Activated CD4-positive, alpha-beta memory T cell treated with anti-CD3 and anti-CD28 coated beads for 36 hours (primary cell): ENCODE measurements at regions of chr12 and their contacts with region 1.

Region 1: GRCh38 chr12:53352331-53353256 is 16.4 kb upstream of the SP7 start:
- DNase-seq: peak; percentile 90
- H3K4me3 Mint-ChIP-seq: no peak overlapping the region
- H3K27ac Mint-ChIP-seq: peak overlapping the region; percentile 12
- H3K4me1 Mint-ChIP-seq: peaks cover 9% of the 10 kb centered on the region
- H3K27me3 Mint-ChIP-seq: no peaks in the 10 kb centered on the region

Region 2: DNA sequence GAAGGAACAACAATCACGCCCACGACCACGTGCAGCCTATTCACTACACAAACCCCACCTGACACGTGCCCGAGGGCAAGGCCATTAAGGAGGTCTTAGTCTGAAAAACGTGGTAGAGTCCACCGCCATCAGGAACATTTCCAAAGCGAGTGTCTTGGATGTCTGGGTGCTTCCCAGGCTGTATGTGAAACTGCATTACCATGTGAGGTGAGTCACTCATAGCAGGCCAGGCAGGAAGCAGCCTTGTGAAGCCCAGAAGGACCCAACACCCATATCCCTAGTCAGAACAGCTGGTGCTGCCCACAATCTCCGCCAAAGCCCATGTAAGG is 515.2 kb before region 1 on chr12:
- CTCF ChIA-PET with region 1: no interaction called
- POLR2A ChIA-PET with region 1: no interaction called
- intact Hi-C with region 1: no loop called
- DNase-seq: peak; percentile 12
- H3K4me3 Mint-ChIP-seq: no peak overlapping the region
- H3K27ac Mint-ChIP-seq: no peak overlapping the region
- H3K4me1 Mint-ChIP-seq: peaks cover 22% of the 10 kb centered on the region
- H3K27me3 Mint-ChIP-seq: peaks cover 15% of the 10 kb centered on the region

Region 3: GRCh38 chr12:53047221-53048042 is 305.2 kb before region 1 on chr12:
- CTCF ChIA-PET with region 1: no interaction called
- POLR2A ChIA-PET with region 1: no interaction called
- intact Hi-C with region 1: no loop called
- DNase-seq: peak; percentile 74
- H3K4me3 Mint-ChIP-seq: peak overlapping the region; percentile 32
- H3K27ac Mint-ChIP-seq: no peak overlapping the region
- H3K4me1 Mint-ChIP-seq: peaks cover 29% of the 10 kb centered on the region
- H3K27me3 Mint-ChIP-seq: no peaks in the 10 kb centered on the region

Region 4: DNA sequence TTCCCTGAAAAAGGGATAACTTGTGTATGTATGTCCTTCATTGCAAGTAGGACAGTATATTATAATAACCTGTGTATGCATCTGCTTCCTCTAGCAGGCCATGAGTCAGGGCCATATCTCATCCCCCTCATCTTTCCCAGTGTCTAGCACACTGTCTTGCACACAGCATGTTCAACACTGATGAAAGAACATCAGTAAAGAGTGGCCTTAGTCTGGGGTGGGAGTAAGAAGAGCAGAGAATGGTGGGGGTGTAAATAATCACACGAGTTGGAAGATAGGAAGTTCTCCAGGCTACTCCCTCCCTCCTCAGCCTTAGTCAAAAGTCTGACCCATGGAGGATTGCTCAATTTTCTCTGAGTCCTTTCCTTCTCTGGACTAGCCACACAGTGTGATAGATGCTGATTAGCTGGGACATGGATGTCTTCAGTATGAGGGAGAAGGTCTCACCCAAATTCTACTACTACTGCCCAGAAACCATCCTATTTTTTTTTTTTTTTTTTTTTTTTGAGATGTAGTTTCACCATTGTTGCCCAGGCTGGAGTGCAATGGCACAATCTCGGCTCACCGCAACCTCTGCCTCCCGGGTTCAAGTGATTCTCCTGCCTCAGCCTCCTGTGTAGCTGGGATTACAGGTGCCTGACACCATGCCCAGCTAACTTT is 12.8 kb after region 1 on chr12:
- CTCF ChIA-PET with region 1: interaction called, 20 read pairs
- POLR2A ChIA-PET with region 1: no interaction called
- intact Hi-C with region 1: no loop called
- DNase-seq: no peak
- H3K4me3 Mint-ChIP-seq: no peak overlapping the region
- H3K27ac Mint-ChIP-seq: peak overlapping the region; percentile 79
- H3K4me1 Mint-ChIP-seq: peaks cover 9% of the 10 kb centered on the region
- H3K27me3 Mint-ChIP-seq: no peaks in the 10 kb centered on the region

Region 5: DNA sequence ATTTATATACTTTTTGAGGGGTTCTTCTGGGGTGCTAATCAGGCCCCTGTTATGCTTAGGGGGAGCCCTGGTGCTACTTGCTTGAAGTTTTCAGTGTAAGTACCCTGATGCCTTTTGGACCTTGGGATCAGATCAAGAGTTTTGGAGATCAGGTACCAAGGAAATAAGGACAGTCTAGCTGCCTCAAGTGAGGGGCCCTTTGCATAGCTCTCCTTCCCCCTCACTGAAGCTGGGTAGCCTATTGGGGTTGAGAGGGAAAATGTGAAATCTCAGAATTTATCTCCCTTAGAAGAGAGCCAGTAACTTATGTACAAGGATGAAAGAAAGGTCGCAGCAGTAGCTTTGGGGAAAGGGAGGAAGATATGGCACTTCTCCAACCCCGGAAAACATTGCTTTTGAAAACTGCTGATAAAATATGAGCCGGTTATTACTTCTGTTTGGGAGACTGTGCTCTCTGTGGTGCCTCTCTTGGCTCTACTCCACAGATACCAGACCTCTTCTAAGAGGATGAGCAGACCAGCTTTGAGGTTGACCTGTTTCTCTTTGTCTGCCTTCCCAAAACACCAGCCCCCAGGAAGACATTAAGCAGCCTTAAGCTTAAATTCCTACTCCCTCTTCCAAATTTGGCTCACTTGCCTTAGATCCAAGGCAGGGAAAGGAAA is 62.3 kb after region 1 on chr12:
- CTCF ChIA-PET with region 1: interaction called, 207 read pairs
- POLR2A ChIA-PET with region 1: no interaction called
- intact Hi-C with region 1: no loop called
- DNase-seq: no peak
- H3K4me3 Mint-ChIP-seq: no peak overlapping the region
- H3K27ac Mint-ChIP-seq: no peak overlapping the region
- H3K4me1 Mint-ChIP-seq: peaks cover 54% of the 10 kb centered on the region
- H3K27me3 Mint-ChIP-seq: no peaks in the 10 kb centered on the region

Region 6: GRCh38 chr12:53427905-53428594 is 75.5 kb after region 1 on chr12:
- CTCF ChIA-PET with region 1: interaction called, 207 read pairs
- POLR2A ChIA-PET with region 1: no interaction called
- intact Hi-C with region 1: no loop called
- DNase-seq: peak; percentile 69
- H3K4me3 Mint-ChIP-seq: no peak overlapping the region
- H3K27ac Mint-ChIP-seq: no peak overlapping the region
- H3K4me1 Mint-ChIP-seq: peaks cover 14% of the 10 kb centered on the region
- H3K27me3 Mint-ChIP-seq: no peaks in the 10 kb centered on the region

Region 7: DNA sequence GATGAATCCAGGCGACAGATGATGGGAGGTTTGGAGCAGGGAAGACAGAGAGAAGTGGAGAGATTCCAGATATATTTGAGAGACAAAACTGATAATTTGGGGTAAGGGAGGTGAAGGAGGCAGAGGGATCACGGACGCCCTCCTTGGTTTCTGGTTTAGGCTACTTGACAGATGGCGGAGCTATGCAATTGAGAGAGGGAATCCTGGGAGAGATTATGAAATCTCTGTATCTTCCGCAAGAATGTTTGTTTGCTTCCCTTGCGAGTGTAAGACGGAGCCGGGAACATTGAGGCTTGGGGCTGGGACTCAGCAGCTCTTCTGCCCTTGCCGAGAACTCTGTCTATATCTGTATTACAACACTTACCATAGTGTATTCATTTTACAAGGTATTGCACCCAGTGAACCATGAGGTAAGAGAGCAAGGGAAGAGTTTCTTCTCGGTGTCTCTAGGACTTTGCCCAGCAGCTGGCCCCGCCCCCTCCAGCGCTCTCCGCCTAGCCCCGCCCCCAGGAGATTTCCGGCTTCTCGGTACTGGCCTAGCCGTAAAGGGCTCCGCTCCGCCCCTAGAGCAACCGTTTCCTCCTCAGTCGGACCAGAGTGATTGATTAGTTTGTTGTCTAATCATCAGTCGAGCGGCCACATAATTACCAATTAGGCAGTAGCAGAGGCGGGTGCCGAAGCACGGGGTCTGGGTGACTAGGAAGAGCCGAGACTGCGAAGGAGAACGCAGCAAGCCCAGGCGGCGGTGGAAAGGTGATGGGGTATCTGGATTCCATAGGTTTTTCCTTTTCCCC is 88.6 kb after region 1 on chr12 and contains the start of gene PRR13:
- CTCF ChIA-PET with region 1: interaction called, 14 read pairs
- POLR2A ChIA-PET with region 1: no interaction called
- intact Hi-C with region 1: no loop called
- DNase-seq: peak; percentile 100
- H3K4me3 Mint-ChIP-seq: peak within 1 kb of the TSS; percentile 97
- H3K27ac Mint-ChIP-seq: peak within 1 kb of the TSS; percentile 93
- H3K4me1 Mint-ChIP-seq: peaks cover 37% of the 10 kb centered on the region
- H3K27me3 Mint-ChIP-seq: no peaks in the 10 kb centered on the region
- total RNA-seq, gene PRR13: 218 to 221 TPM

Region 8: DNA sequence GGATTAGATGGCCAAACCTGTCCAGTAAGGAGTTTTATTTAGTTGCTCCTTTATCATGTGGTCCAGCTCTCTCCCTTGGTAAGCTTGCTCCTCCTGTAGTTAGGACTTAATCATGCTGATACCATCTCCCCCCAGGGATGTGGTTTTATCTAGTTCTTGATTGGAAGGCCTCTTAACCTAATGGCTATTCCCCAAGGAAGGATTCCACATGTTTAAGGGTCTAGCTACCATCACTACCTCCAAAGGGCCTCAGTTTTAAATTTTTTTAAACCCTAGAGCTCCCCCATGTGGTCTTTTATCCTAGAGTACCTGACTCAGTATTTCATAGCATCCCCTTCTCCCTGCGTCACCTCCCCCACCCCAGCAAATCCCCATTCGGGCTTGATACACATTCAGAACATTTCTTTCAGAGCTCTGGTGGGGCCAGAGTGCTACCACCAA is 124.2 kb after region 1 on chr12:
- CTCF ChIA-PET with region 1: interaction called, 19 read pairs
- POLR2A ChIA-PET with region 1: interaction called, 3 read pairs
- intact Hi-C with region 1: no loop called
- DNase-seq: no peak
- H3K4me3 Mint-ChIP-seq: no peak overlapping the region
- H3K27ac Mint-ChIP-seq: peak overlapping the region; percentile 94
- H3K4me1 Mint-ChIP-seq: peaks cover 60% of the 10 kb centered on the region
- H3K27me3 Mint-ChIP-seq: no peaks in the 10 kb centered on the region